Spleen (tissue), 13 donors: ENCODE measurements at regions of chr20 and their contacts with region 1.

Region 1: DNA sequence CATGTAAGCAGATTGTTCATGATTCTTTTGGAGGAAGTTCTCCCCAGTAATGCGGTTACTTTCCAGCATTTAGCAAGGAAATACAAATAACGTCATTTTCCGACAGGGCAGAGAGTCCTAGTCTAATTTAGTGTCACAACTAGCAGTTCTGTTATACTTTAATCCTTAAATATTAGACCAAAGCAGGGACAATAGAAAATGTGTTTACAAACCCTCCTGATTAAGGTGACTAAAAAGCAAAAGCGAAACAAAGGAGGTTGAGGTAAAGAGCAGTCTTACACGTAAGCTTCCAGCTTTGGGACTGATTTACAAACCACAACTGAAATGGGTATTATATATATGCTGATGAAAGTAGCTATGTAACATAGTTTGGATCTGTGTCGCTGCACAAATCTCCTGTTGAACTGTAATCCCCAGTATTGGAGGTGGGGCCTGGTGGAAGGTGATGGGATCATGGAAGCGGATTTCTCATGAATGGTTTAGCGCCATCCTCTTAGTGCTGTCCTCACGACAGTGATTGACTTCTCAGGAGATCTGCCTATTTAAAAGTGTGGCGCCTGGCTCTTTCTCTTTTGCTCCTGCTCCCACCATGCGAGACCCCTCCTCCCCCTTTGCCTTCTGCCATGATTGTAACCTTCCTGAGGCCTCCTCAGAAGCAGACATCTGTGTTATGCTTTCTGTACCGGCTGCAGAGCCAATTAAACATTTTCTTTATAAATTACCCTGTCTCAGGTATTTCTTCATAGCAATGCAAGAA is 81.9 kb downstream of the PLCB1 start:
- DNase-seq: no peak
- H3K4me3 ChIP-seq: peak overlapping the region in 3 of 8 donors; percentile 4 to 50 (median 21)
- H3K27ac ChIP-seq: peak overlapping the region in 4 of 8 donors; percentile 41 to 62 (median 58)
- H3K4me1 ChIP-seq: peaks cover 0 to 32% (median 16%) of the 10 kb centered on the region in 6 donors
- H3K27me3 ChIP-seq: no peaks in the 10 kb centered on the region
- CTCF ChIP-seq: no peak
- POLR2A ChIP-seq: no peak

Region 2: DNA sequence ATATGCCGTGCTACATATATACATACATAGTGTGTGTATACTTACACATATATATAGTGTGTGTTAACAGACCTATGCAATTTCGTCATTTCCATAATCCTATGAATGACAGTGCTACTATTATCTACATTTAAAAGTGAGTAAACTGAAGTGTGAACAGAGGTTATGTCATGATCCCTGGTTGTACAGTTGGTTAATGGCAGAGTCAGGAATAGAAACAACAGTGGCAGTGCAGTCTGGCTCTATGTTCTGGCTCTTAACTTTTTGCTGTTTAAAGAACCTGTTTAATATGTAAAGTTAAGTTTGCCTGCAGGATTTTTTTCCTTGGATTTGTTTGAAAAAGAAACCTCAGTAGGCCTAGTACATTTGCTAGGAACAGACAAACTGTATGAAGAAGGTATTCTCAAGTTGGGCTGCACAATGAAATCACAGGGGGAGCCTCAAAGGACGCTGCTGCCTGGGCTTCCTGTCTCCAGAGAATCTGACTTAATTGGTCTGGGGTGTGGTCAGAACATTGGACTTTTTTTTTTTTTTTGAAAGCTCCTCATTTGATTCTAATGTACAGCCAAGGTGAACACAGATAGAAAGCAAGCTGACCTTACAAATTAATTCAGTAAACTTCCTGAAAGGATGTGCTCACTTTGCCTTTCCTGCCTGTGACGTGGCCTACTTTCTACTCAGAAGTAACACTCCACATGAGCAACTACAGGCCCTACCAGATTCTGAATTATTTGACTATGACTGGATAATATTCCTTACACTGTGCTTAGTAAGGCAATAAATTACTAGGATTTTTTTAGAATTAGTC is 52.5 kb before region 1 on chr20:
- intact Hi-C with region 1: loop called (anchors 10 kb)
- DNase-seq: no peak
- H3K4me3 ChIP-seq: no peak overlapping the region
- H3K27ac ChIP-seq: peak overlapping the region in 6 of 8 donors; percentile 5 to 48 (median 20)
- H3K4me1 ChIP-seq: peaks cover 0 to 25% (median 13%) of the 10 kb centered on the region in 6 donors
- H3K27me3 ChIP-seq: no peaks in the 10 kb centered on the region
- CTCF ChIP-seq: no peak
- POLR2A ChIP-seq: no peak

Region 3: GRCh38 chr20:8331740-8332412 is 117.9 kb after region 1 on chr20:
- intact Hi-C with region 1: no loop called
- DNase-seq: no peak
- H3K4me3 ChIP-seq: no peak overlapping the region
- H3K27ac ChIP-seq: no peak overlapping the region
- H3K4me1 ChIP-seq: peaks cover 0 to 22% (median 2%) of the 10 kb centered on the region in 6 donors
- H3K27me3 ChIP-seq: no peaks in the 10 kb centered on the region
- CTCF ChIP-seq: no peak
- POLR2A ChIP-seq: no peak